AG04449 (cell line): ENCODE measurements at regions of chr10 and their contacts with region 1.

Region 1: DNA sequence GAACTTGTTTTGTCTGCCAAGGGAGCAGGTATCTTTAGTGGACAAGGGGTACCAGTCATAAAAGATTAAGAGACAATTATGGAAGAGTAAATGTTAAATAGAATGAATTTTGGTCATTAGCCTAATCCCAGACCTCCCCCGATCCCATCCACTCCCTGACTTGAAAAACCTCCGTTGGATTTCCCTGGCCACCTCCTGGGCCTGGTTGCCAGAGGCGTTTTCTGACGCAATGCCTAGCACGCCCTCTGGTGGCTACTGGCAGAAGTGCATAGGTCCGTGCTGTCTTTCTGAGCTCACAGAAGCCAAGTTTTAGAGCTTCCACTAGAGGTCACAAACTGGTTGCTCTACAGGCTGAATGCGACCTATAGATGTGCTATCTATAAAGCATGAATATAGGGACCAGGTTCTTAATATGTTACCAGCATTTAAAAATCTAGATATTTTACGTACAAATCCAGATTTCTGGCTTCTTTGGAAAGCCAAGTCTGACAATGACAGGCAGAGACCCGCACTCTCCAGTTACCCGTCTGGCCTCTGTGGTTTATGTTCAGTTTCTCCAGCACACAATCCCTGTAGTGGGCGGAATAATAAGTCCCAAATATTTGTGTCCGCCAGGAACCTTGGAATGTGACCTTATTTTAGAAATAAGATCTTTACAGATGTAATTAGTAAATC is 39.8 kb downstream of the SPOCK2 start:
- DNase-seq: peak; percentile 53
- H3K4me3 ChIP-seq: no peak overlapping the region
- CTCF ChIP-seq: peak; percentile 98

Region 2: GRCh38 chr10:71860243-71861029 is 188.2 kb before region 1 on chr10:
- CTCF ChIA-PET with region 1: no interaction called
- POLR2A ChIA-PET with region 1: no interaction called
- DNase-seq: peak; percentile 100
- H3K4me3 ChIP-seq: no peak overlapping the region
- CTCF ChIP-seq: no peak

Region 3: GRCh38 chr10:71899665-71900412 is 148.7 kb before region 1 on chr10:
- CTCF ChIA-PET with region 1: interaction called, 165 read pairs
- POLR2A ChIA-PET with region 1: interaction called, 3 read pairs
- DNase-seq: no peak
- H3K4me3 ChIP-seq: no peak overlapping the region
- CTCF ChIP-seq: no peak

Region 4: GRCh38 chr10:71963756-71964668 is 84.6 kb before region 1 on chr10 and contains the start of gene CHST3:
- CTCF ChIA-PET with region 1: interaction called, 155 read pairs
- POLR2A ChIA-PET with region 1: interaction called, 6 read pairs
- DNase-seq: no peak
- H3K4me3 ChIP-seq: peak within 1 kb of the TSS; percentile 93
- CTCF ChIP-seq: no peak

Region 5: GRCh38 chr10:72030762-72031543 is 17.6 kb before region 1 on chr10:
- CTCF ChIA-PET with region 1: interaction called, 22 read pairs
- POLR2A ChIA-PET with region 1: no interaction called
- DNase-seq: no peak
- H3K4me3 ChIP-seq: no peak overlapping the region
- CTCF ChIP-seq: no peak

Region 6: DNA sequence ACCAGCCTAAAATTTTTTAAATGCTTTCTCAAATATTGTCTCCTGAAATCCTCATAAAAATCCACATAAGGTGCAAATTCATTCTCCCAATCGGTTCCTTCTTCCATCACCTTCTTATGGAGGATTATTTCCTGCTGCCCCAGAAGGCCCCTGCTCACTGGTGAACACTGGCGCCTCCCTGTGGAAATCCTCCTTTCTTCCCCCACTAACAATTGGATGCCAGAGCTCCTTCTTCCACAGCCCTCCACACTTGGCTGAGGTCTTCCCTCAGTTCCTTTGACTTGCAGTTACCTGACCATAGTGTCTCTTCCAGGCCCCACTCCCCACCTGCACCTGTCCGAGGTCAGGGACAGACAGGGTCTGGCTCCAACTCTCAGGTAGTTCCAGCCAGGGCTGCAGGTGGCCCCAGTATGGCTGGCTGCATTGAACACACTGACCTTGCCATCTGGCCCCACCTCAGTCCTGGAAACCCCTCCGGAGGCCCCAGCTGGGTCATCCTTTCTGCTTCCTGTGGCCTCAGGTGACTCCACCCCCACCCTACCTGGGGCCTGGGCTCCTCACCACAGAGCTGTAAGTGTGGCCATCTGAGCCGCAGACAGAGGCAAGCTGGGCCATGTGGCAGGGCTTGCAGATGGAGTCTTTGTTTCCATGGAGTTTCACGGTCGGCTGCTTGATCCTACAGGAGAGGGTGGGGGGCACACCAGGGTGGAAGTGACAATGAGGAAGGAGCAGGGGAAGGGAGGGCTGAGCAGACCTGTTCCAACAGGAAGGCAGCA is 21.4 kb after region 1 on chr10:
- CTCF ChIA-PET with region 1: interaction called, 14 read pairs
- POLR2A ChIA-PET with region 1: no interaction called
- DNase-seq: no peak
- H3K4me3 ChIP-seq: no peak overlapping the region
- CTCF ChIP-seq: no peak

Region 7: DNA sequence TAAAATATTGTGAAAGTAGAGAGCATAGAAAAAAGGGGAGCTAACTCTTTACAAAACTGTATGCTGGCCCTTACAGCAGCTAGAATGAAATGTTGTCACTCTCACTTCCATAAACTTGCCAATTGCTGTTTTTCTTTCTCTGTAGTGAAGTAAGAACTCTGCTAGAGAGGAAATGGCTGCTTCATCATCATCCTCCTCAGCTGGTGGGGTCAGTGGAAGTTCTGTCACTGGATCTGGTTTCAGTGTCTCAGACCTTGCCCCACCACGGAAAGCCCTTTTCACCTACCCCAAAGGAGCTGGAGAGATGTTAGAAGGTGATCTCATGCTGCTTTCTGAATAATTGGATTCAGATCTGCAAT is 175.1 kb after region 1 on chr10:
- CTCF ChIA-PET with region 1: interaction called, 74 read pairs
- POLR2A ChIA-PET with region 1: no interaction called
- DNase-seq: no peak
- H3K4me3 ChIP-seq: no peak overlapping the region
- CTCF ChIP-seq: no peak